Activated naive CD4-positive, alpha-beta T cell treated with anti-CD3 and anti-CD28 coated beads for 36 hours (primary cell): ENCODE measurements at regions of chr16 and their contacts with region 1.

Region 1: GRCh38 chr16:81723098-81723723 is 55.9 kb upstream of the PLCG2 start:
- DNase-seq: peak; percentile 53
- H3K4me3 Mint-ChIP-seq: no peak overlapping the region
- H3K27ac Mint-ChIP-seq: no peak overlapping the region
- H3K4me1 Mint-ChIP-seq: peaks cover 3% of the 10 kb centered on the region
- H3K27me3 Mint-ChIP-seq: no peaks in the 10 kb centered on the region

Region 2: GRCh38 chr16:81204798-81205680 is 518.2 kb before region 1 on chr16:
- CTCF ChIA-PET with region 1: interaction called, 4 read pairs
- intact Hi-C with region 1: loop called (anchors 5 kb)
- DNase-seq: peak; percentile 43
- H3K4me3 Mint-ChIP-seq: no peak overlapping the region
- H3K27ac Mint-ChIP-seq: no peak overlapping the region
- H3K4me1 Mint-ChIP-seq: no peaks in the 10 kb centered on the region
- H3K27me3 Mint-ChIP-seq: peaks cover 3% of the 10 kb centered on the region

Region 3: GRCh38 chr16:81403616-81404373 is 319.4 kb before region 1 on chr16:
- CTCF ChIA-PET with region 1: interaction called, 36 read pairs
- intact Hi-C with region 1: loop called (anchors 1 kb)
- DNase-seq: peak; percentile 89
- H3K4me3 Mint-ChIP-seq: no peak overlapping the region
- H3K27ac Mint-ChIP-seq: no peak overlapping the region
- H3K4me1 Mint-ChIP-seq: no peaks in the 10 kb centered on the region
- H3K27me3 Mint-ChIP-seq: no peaks in the 10 kb centered on the region

Region 4: GRCh38 chr16:81639956-81640680 is 83.1 kb before region 1 on chr16:
- CTCF ChIA-PET with region 1: no interaction called
- intact Hi-C with region 1: no loop called
- DNase-seq: no peak
- H3K4me3 Mint-ChIP-seq: no peak overlapping the region
- H3K27ac Mint-ChIP-seq: no peak overlapping the region
- H3K4me1 Mint-ChIP-seq: peaks cover 11% of the 10 kb centered on the region
- H3K27me3 Mint-ChIP-seq: no peaks in the 10 kb centered on the region

Region 5: GRCh38 chr16:81696961-81697615 is 26.1 kb before region 1 on chr16:
- CTCF ChIA-PET with region 1: interaction called, 10 read pairs
- intact Hi-C with region 1: no loop called
- DNase-seq: peak; percentile 78
- H3K4me3 Mint-ChIP-seq: no peak overlapping the region
- H3K27ac Mint-ChIP-seq: peak overlapping the region; percentile 63
- H3K4me1 Mint-ChIP-seq: no peaks in the 10 kb centered on the region
- H3K27me3 Mint-ChIP-seq: no peaks in the 10 kb centered on the region